T-cell (primary cell): ENCODE measurements at regions of chr1 and their contacts with region 1.

Region 1: GRCh38 chr1:154955718-154956543 is at the start of gene PBXIP1:
- DNase-seq: peak; percentile 57 to 95 (median 83)
- ATAC-seq: peak; percentile 48 to 63 (median 56)
- H3K4me3 ChIP-seq: peak within 1 kb of the TSS; percentile 79 to 94
- H3K4me3 Mint-ChIP-seq: peak within 1 kb of the TSS; percentile 95 to 100 (median 97)
- H3K27ac ChIP-seq: peak within 1 kb of the TSS; percentile 99
- H3K27ac Mint-ChIP-seq: peak within 1 kb of the TSS; percentile 100
- H3K4me1 ChIP-seq: peaks cover 44 to 83% of the 10 kb centered on the region in 2 experiments
- H3K4me1 Mint-ChIP-seq: peaks cover 72 to 79% (median 77%) of the 10 kb centered on the region in 3 donors
- H3K27me3 ChIP-seq: no peaks in the 10 kb centered on the region
- H3K27me3 Mint-ChIP-seq: no peaks in the 10 kb centered on the region
- total RNA-seq, gene PBXIP1: 299 to 450 (median 328) TPM

Region 2: DNA sequence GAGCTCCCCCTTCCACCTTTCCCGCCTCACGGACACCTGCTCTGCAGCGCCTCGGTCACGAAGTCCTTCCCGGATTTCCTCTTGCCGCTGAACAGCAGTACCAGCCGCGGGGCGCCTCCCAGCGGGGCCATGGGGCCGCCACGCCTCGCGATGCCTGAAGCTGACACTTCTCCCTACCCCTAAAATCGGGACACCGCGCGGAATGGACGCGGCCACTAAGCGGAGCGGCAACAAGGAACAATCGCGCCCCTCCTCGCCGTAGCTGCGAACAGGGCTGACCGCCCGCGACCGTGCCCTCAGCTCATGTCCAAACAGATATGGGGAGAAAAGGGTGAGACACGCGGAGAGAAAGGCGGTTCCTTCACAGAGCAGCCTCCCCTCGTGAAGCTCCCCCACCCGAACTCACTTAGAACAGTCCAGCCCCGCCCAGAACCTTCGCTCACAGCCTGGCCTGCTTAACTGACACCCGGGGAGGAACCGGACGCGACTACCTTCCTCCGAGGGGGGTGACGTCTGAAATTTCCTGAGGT is 19.3 kb before region 1 on chr1 and contains the start of gene PMVK:
- CTCF ChIA-PET with region 1: interaction called in 1 of 2 experiments, 14 read pairs
- POLR2A ChIA-PET with region 1: interaction called, 7 to 23 read pairs
- DNase-seq: peak; percentile 90 to 98 (median 95)
- ATAC-seq: peak; percentile 79 to 94 (median 90)
- H3K4me3 ChIP-seq: peak within 1 kb of the TSS; percentile 75 to 96
- H3K4me3 Mint-ChIP-seq: peak within 1 kb of the TSS; percentile 96 to 98 (median 97)
- H3K27ac ChIP-seq: peak within 1 kb of the TSS; percentile 97
- H3K27ac Mint-ChIP-seq: peak within 1 kb of the TSS; percentile 97 to 99
- H3K4me1 ChIP-seq: peaks cover 19 to 56% of the 10 kb centered on the region in 2 experiments
- H3K4me1 Mint-ChIP-seq: peaks cover 51 to 61% (median 57%) of the 10 kb centered on the region in 3 donors
- H3K27me3 ChIP-seq: no peaks in the 10 kb centered on the region
- H3K27me3 Mint-ChIP-seq: no peaks in the 10 kb centered on the region
- total RNA-seq, gene PMVK: 12.6 to 24.9 (median 22.4) TPM

Region 3: GRCh38 chr1:154974063-154974807 is 18.3 kb after region 1 on chr1 and contains the start of gene CKS1B:
- CTCF ChIA-PET with region 1: interaction called in 1 of 2 experiments, 6 read pairs
- POLR2A ChIA-PET with region 1: interaction called, 9 to 22 read pairs
- DNase-seq: peak; percentile 92 to 99 (median 96)
- ATAC-seq: peak; percentile 85 to 90 (median 88)
- H3K4me3 ChIP-seq: peak within 1 kb of the TSS; percentile 73 to 89
- H3K4me3 Mint-ChIP-seq: no peak within 1 kb of the TSS
- H3K27ac ChIP-seq: peak within 1 kb of the TSS; percentile 90
- H3K27ac Mint-ChIP-seq: no peak within 1 kb of the TSS
- H3K4me1 ChIP-seq: peaks cover 8 to 51% of the 10 kb centered on the region in 2 experiments
- H3K4me1 Mint-ChIP-seq: peaks cover 17 to 35% (median 18%) of the 10 kb centered on the region in 3 donors
- H3K27me3 ChIP-seq: no peaks in the 10 kb centered on the region
- H3K27me3 Mint-ChIP-seq: no peaks in the 10 kb centered on the region
- total RNA-seq, gene CKS1B: 7.9 to 11.8 (median 10.3) TPM

Region 4: GRCh38 chr1:154982897-154983648 is 27.1 kb after region 1 on chr1 and contains the start of gene FLAD1:
- CTCF ChIA-PET with region 1: interaction called, 3 to 6 read pairs
- POLR2A ChIA-PET with region 1: interaction called in 1 of 2 experiments, 19 read pairs
- DNase-seq: peak; percentile 85 to 98 (median 95)
- ATAC-seq: peak; percentile 99 to 100 (median 100)
- H3K4me3 ChIP-seq: peak within 1 kb of the TSS; percentile 67 to 84
- H3K4me3 Mint-ChIP-seq: no peak within 1 kb of the TSS
- H3K27ac ChIP-seq: peak within 1 kb of the TSS; percentile 54
- H3K27ac Mint-ChIP-seq: no peak within 1 kb of the TSS
- H3K4me1 ChIP-seq: peaks cover 14 to 28% of the 10 kb centered on the region in 2 experiments
- H3K4me1 Mint-ChIP-seq: peaks cover 0 to 17% (median 13%) of the 10 kb centered on the region in 3 donors
- H3K27me3 ChIP-seq: no peaks in the 10 kb centered on the region
- H3K27me3 Mint-ChIP-seq: no peaks in the 10 kb centered on the region
- total RNA-seq, gene FLAD1: 32.8 to 64.3 (median 53.4) TPM

Region 5: DNA sequence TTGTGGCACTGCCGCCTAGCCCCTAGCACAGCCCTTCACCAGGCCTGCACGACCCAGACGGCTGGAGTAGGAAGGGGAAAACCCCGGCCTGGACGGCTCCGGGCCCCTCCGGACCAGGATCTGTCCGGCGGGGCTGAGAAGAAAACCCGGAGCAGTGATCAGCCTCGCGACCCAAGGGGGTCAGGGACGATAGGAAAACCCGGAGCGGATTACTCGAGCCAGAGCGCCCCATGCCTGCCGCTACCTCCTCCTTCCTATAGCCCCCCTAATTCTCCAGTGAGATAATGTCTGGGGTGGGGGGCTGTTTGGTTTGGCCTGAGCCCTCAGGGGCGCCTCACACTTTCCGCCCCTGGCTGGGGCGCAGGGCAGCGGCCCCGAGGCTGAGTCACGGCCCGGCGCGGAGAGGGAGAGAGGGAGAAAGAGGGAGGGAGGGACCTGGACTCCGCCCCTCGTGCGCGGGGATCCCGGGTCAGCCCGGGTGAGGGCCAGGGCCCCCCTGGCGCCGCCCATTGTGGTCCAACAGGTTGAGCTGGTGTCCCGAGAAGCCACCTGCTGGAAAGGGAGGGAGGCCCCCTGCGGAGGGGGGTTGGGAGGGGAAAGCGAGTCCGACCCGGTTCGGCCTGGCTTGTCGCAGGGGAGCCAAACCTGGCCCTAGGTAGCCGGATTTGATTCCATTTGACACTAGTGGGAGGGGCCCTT is 44.9 kb after region 1 on chr1:
- CTCF ChIA-PET with region 1: interaction called in 1 of 2 experiments, 10 read pairs
- POLR2A ChIA-PET with region 1: interaction called, 3 to 6 read pairs
- DNase-seq: peak in 32 of 35 experiments; percentile 32 to 80 (median 50)
- ATAC-seq: peak; percentile 31 to 44 (median 39)
- H3K4me3 ChIP-seq: peak overlapping the region; percentile 72 to 97
- H3K4me3 Mint-ChIP-seq: peak overlapping the region; percentile 84 to 89 (median 88)
- H3K27ac ChIP-seq: peak overlapping the region; percentile 95
- H3K27ac Mint-ChIP-seq: peak overlapping the region; percentile 84 to 85
- H3K4me1 ChIP-seq: peaks cover 21 to 80% of the 10 kb centered on the region in 2 experiments
- H3K4me1 Mint-ChIP-seq: peaks cover 44 to 52% (median 50%) of the 10 kb centered on the region in 3 donors
- H3K27me3 ChIP-seq: no peaks in the 10 kb centered on the region
- H3K27me3 Mint-ChIP-seq: no peaks in the 10 kb centered on the region